ENCODE measurements at regions of chr3 and their contacts with region 1.

Region 1: GRCh38 chr3:172848910-172849309 is 98.4 kb downstream of the ECT2 start:
- DNase-seq: no peak
- ATAC-seq: no peak
- H3K4me3 ChIP-seq: no peak overlapping the region
- H3K4me3 Mint-ChIP-seq: no peak overlapping the region
- H3K27ac ChIP-seq: no peak overlapping the region
- H3K27ac Mint-ChIP-seq: no peak overlapping the region
- H3K4me1 ChIP-seq: no peaks in the 10 kb centered on the region
- H3K4me1 Mint-ChIP-seq: no peaks in the 10 kb centered on the region
- H3K27me3 ChIP-seq: peaks cover 0 to 2% of the 10 kb centered on the region in 2 experiments
- H3K27me3 Mint-ChIP-seq: peaks cover 24 to 26% of the 10 kb centered on the region in 2 donors

Region 2: GRCh38 chr3:172836390-172836997 is 12.4 kb before region 1 on chr3:
- CTCF ChIA-PET with region 1: interaction called in 1 of 2 experiments, 10 read pairs
- POLR2A ChIA-PET with region 1: no interaction called
- DNase-seq: peak in 1 of 35 experiments; percentile 18
- ATAC-seq: no peak
- H3K4me3 ChIP-seq: no peak overlapping the region
- H3K4me3 Mint-ChIP-seq: no peak overlapping the region
- H3K27ac ChIP-seq: no peak overlapping the region
- H3K27ac Mint-ChIP-seq: no peak overlapping the region
- H3K4me1 ChIP-seq: no peaks in the 10 kb centered on the region
- H3K4me1 Mint-ChIP-seq: no peaks in the 10 kb centered on the region
- H3K27me3 ChIP-seq: peaks cover 0 to 5% of the 10 kb centered on the region in 2 experiments
- H3K27me3 Mint-ChIP-seq: peaks cover 4% of the 10 kb centered on the region in 2 donors